Endothelial cell of umbilical vein (primary cell): ENCODE measurements at regions of chr17 and their contacts with region 1.

Region 1: GRCh38 chr17:7989781-7990655 is 12.4 kb upstream of the GUCY2D start:
- DNase-seq: peak; percentile 66
- H3K4me3 ChIP-seq: peak overlapping the region; percentile 45 to 53 (median 51)
- H3K27ac ChIP-seq: no peak overlapping the region
- H3K4me1 ChIP-seq: peaks cover 4% of the 10 kb centered on the region
- H3K27me3 ChIP-seq: peaks cover 3 to 12% of the 10 kb centered on the region in 2 experiments
- CTCF ChIP-seq: peak; percentile 93 to 98
- POLR2A ChIP-seq: no peak

Region 2: GRCh38 chr17:7740481-7741001 is 249.5 kb before region 1 on chr17:
- CTCF ChIA-PET with region 1: interaction called, 109 read pairs
- POLR2A ChIA-PET with region 1: no interaction called
- dilution Hi-C with region 1: no loop called
- intact Hi-C with region 1: loop called (anchors 1 kb)
- DNase-seq: no peak
- H3K4me3 ChIP-seq: no peak overlapping the region
- H3K27ac ChIP-seq: no peak overlapping the region
- H3K4me1 ChIP-seq: peaks cover 7% of the 10 kb centered on the region
- H3K27me3 ChIP-seq: peaks cover 6 to 7% of the 10 kb centered on the region in 2 experiments
- CTCF ChIP-seq: no peak
- POLR2A ChIP-seq: no peak

Region 3: GRCh38 chr17:7818746-7819645 is 171.0 kb before region 1 on chr17:
- CTCF ChIA-PET with region 1: interaction called, 121 read pairs
- POLR2A ChIA-PET with region 1: no interaction called
- dilution Hi-C with region 1: no loop called
- intact Hi-C with region 1: loop called (anchors 1 kb)
- DNase-seq: no peak
- H3K4me3 ChIP-seq: no peak overlapping the region
- H3K27ac ChIP-seq: no peak overlapping the region
- H3K4me1 ChIP-seq: no peaks in the 10 kb centered on the region
- H3K27me3 ChIP-seq: peaks cover 9 to 13% of the 10 kb centered on the region in 2 experiments
- CTCF ChIP-seq: no peak
- POLR2A ChIP-seq: no peak

Region 4: DNA sequence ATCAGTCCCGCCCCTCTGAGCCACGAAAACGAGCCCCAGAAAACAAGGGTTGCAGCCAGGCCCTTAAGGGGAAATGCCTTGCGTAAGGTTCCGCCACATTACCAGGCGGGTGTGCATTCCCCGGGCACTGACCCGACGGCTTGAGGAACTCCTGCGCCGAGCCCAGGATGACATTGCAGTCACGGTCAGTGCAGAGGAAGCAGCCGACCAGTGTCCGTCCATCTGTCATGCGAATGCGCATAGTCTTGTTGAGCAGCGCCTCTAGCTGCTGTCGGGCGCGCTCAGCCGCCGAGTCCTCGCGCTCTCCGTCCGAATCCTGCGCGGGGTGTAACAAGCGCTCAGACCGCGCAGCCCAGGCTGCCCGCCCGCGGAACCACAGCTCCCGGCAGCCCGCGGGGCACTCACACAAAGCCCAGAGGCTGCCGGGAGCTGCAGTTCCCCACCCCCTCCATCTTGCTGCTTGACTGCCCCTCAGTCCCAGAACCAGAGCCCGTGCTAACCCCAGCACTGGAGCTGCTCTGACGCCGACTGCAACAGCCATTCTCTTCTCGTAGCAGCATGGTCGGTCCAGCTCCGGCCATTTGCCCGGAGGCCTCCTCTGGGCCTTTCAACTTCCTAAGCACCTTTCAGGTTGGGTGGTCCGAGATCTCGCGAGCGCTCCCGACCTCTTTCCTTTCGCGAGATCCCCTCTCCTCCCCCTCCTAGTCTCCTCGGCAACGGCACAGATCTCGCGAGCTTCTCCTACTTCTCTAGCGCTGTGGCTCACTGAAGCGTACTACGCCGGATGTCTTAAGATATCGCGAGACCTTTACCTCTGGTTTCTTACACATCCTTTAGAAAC is 132.9 kb before region 1 on chr17 and contains the start of gene NAA38:
- CTCF ChIA-PET with region 1: interaction called, 38 read pairs
- POLR2A ChIA-PET with region 1: interaction called, 3 read pairs
- dilution Hi-C with region 1: no loop called
- intact Hi-C with region 1: loop called (anchors 1 kb)
- DNase-seq: peak; percentile 99
- H3K4me3 ChIP-seq: peak within 1 kb of the TSS; percentile 53 to 78 (median 54)
- H3K27ac ChIP-seq: peak within 1 kb of the TSS; percentile 96
- H3K4me1 ChIP-seq: peaks cover 35% of the 10 kb centered on the region
- H3K27me3 ChIP-seq: no peaks in the 10 kb centered on the region
- CTCF ChIP-seq: peak; percentile 17 to 34
- POLR2A ChIP-seq: peak; percentile 84
- total RNA-seq, gene NAA38: 119 TPM in 2 replicates

Region 5: DNA sequence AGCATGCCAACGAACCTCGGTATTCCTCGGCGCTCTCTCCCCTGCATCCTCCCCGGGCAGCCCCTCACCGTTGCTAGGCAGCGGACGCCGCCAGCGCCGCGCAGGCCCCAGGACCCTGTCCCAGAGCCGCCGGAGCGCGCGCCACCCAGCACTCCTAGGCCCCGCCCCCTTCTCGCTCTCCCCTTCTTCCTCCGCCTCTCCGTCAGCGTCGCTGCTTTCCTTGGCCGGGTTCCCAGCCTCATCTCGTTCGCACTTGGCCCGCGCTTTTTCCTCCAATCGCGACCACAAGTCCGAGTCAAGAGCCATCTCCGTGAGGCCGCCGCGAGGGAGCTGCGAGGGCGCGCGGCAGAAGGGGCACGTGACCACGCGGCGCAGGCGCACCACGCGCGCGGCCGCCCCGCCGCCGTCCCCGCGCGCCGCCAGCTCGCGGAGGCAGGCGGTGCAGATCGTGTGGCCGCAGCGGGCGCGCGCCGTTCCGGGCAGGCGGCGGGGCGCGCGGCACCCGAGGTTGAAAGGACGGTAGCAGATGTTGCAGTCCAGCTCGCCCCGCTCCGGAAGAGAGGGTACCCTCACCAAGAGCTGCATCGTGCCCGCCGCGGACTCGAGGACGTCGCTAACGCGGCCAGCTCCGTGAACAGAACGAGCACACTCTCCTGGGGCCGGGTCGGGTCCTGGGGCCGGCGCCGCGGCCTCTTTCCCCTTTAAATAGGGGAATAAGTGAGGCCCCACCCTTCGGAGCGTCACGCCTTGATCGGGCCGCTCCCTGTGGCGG is 74.2 kb before region 1 on chr17 and contains the start of gene RNF227:
- CTCF ChIA-PET with region 1: interaction called, 109 read pairs
- POLR2A ChIA-PET with region 1: interaction called, 3 read pairs
- dilution Hi-C with region 1: no loop called
- intact Hi-C with region 1: loop called (anchors 1 kb)
- DNase-seq: peak; percentile 98
- H3K4me3 ChIP-seq: peak within 1 kb of the TSS in 2 of 3 experiments; percentile 24 to 44
- H3K27ac ChIP-seq: peak within 1 kb of the TSS; percentile 19
- H3K4me1 ChIP-seq: peaks cover 16% of the 10 kb centered on the region
- H3K27me3 ChIP-seq: no peaks in the 10 kb centered on the region
- CTCF ChIP-seq: no peak
- POLR2A ChIP-seq: no peak
- total RNA-seq, gene RNF227: 0.58 TPM in 2 replicates

Region 6: DNA sequence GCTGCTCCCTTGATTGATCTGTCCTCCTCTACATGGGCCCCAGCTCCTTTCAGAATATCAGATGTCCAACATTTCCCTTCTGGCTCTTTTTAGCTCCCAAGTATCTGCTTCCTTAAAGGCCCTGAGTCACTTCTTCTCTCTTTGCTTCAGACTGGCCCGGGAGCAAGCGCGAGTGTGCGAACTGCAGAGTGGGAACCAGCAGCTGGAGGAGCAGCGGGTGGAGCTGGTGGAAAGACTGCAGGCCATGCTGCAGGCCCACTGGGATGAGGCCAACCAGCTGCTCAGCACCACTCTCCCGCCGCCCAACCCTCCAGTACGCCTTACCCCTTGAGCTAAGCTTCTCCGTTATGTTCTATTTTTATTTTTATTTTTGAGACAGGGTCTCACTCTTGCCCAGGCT is 45.7 kb before region 1 on chr17:
- CTCF ChIA-PET with region 1: interaction called, 15 read pairs
- POLR2A ChIA-PET with region 1: no interaction called
- dilution Hi-C with region 1: no loop called
- intact Hi-C with region 1: no loop called
- DNase-seq: no peak
- H3K4me3 ChIP-seq: no peak overlapping the region
- H3K27ac ChIP-seq: no peak overlapping the region
- H3K4me1 ChIP-seq: no peaks in the 10 kb centered on the region
- H3K27me3 ChIP-seq: no peaks in the 10 kb centered on the region
- CTCF ChIP-seq: no peak
- POLR2A ChIP-seq: no peak

Region 7: GRCh38 chr17:8005960-8006730 is 16.1 kb after region 1 on chr17:
- CTCF ChIA-PET with region 1: interaction called, 33 read pairs
- POLR2A ChIA-PET with region 1: no interaction called
- dilution Hi-C with region 1: no loop called
- intact Hi-C with region 1: no loop called
- DNase-seq: no peak
- H3K4me3 ChIP-seq: no peak overlapping the region
- H3K27ac ChIP-seq: no peak overlapping the region
- H3K4me1 ChIP-seq: no peaks in the 10 kb centered on the region
- H3K27me3 ChIP-seq: peaks cover 38 to 43% of the 10 kb centered on the region in 2 experiments
- CTCF ChIP-seq: no peak
- POLR2A ChIP-seq: no peak

Region 8: DNA sequence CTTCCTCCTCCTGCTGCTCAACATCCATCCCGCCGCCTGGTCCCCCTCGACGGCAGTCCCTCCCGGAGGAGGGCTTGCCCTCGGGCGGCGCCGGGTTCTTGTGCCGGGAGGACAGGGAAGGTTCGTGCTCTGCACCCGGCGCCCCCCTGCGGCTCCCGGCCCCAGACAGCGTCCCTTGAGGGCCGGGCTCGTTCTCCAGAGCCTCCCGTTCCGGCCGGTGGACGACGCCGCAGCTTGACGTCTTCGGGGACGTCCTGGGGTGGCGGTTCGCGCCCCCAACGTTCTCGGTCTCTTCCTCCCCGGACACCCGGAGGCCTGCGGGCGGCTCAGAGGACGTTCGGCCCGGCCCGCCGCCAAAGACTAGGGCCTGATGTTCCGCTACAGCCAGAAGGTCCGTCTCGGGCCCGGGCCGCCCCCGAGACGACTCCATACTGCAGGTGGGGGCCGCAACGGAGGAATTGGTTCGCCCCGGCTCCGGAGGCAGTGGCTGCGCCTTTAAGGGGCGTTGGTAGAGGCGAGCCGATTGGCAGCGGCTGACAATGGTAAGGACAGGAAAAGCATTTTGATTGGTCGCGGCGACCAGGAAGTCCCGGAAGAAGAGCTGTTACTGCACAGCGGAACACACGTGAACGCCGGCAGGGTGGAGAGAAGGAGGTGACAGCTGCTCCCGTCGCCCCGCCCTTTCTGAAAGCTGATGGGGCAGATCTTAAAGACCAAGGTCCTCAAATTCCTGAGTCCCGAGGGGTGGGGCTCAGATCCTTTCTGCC is 199.9 kb after region 1 on chr17 and contains the start of gene BORCS6:
- CTCF ChIA-PET with region 1: no interaction called
- POLR2A ChIA-PET with region 1: no interaction called
- dilution Hi-C with region 1: no loop called
- intact Hi-C with region 1: no loop called
- DNase-seq: peak; percentile 98
- H3K4me3 ChIP-seq: peak within 1 kb of the TSS; percentile 45 to 66 (median 49)
- H3K27ac ChIP-seq: peak within 1 kb of the TSS; percentile 65
- H3K4me1 ChIP-seq: peaks cover 27% of the 10 kb centered on the region
- H3K27me3 ChIP-seq: no peaks in the 10 kb centered on the region
- CTCF ChIP-seq: peak in 1 of 2 donors; percentile 5
- POLR2A ChIP-seq: no peak
- total RNA-seq, gene BORCS6: 8.3 and 9.0 TPM in 2 replicates